Mammary epithelial cell (primary cell): ENCODE measurements at regions of chr3 and their contacts with region 1.

Region 1: DNA sequence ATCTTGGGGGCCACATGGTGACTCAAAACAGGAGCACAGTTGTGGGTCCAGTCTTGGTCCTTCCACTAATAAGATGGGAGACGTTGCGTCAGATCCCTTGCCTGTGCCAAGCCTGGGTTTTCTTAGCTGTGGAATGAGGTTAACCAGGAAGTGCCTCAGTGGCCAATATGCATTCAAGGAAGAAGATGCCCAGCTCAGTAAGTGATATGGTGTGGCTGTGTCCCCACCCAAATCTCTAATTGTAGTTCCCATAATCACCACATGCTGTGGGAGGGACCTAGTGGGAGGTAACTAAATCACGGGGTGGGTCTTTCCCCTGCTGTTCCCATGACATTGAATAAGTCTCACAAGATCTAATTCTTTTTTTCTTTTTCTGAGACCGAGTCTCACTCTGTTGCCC is 6.4 kb downstream of the ALG1L2 start:
- DNase-seq: no peak
- H3K4me3 ChIP-seq: no peak overlapping the region
- H3K27ac ChIP-seq: no peak overlapping the region
- H3K4me1 ChIP-seq: no peaks in the 10 kb centered on the region
- H3K27me3 ChIP-seq: no peaks in the 10 kb centered on the region
- CTCF ChIP-seq: no peak

Region 2: DNA sequence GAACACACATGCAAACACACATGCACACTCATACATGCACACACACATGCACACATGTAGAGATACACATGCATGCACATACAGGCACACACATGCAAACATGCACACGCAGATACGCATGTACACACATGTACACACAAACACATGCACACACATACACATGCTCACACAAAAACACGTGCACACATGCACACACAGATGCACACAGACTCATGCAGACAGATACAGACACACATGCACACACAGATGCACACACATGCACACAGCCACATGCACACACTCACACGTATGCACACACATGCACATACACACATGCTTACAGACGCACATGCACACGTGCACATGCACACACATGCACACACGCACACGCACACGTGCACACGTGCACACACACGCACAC is 43.7 kb before region 1 on chr3:
- CTCF ChIA-PET with region 1: no interaction called
- dilution Hi-C with region 1: no loop called
- in situ Hi-C with region 1: loop called in 1 of 2 experiments (anchors 5 kb)
- intact Hi-C with region 1: no loop called
- DNase-seq: no peak
- H3K4me3 ChIP-seq: no peak overlapping the region
- H3K27ac ChIP-seq: no peak overlapping the region
- H3K4me1 ChIP-seq: no peaks in the 10 kb centered on the region
- H3K27me3 ChIP-seq: no peaks in the 10 kb centered on the region
- CTCF ChIP-seq: no peak

Region 3: GRCh38 chr3:130111185-130111864 is 23.3 kb after region 1 on chr3:
- CTCF ChIA-PET with region 1: no interaction called
- dilution Hi-C with region 1: no loop called
- in situ Hi-C with region 1: no loop called
- intact Hi-C with region 1: no loop called
- DNase-seq: peak; percentile 98
- H3K4me3 ChIP-seq: peak overlapping the region; percentile 72 to 79 (median 76)
- H3K27ac ChIP-seq: peak overlapping the region; percentile 90
- H3K4me1 ChIP-seq: peaks cover 4% of the 10 kb centered on the region
- H3K27me3 ChIP-seq: no peaks in the 10 kb centered on the region
- CTCF ChIP-seq: no peak